AG04449 (cell line): ENCODE measurements at regions of chr10 and their contacts with region 1.

Region 1: GRCh38 chr10:103781329-103782061 is 73.9 kb downstream of the SH3PXD2A start:
- DNase-seq: peak; percentile 91
- H3K4me3 ChIP-seq: no peak overlapping the region
- CTCF ChIP-seq: peak; percentile 37

Region 2: DNA sequence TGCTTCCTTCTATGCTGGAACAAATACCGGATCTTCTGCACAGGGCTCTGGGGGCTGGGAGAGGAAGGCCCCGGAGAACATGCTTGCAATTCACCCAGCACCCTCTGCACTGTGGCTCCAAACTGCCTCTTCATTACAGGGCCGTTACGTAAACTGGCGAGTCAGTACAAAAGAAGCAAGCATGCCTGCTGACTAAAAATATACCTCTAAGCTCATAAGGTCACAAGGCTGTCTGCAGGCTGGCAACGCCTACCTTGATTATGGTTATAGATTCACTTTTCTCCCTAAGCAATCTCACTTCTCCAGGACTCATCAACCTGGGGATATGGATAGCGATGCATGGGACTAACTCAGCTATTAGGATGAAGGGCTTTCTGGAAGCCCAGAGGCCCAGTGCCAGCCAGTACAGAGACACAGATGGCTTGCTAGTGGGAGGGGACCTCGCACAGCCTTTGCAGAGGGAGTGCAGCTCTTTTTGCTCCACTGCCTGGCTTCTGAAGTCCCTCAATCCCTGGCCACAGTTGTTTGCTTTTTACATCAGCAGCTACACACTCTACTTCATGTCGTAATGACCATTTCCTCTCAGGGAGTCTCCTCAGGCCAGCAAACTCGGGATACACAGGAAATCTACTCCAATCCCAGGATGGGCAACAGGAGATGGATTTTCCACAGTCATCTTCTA is 22.3 kb before region 1 on chr10:
- CTCF ChIA-PET with region 1: interaction called, 10 read pairs
- POLR2A ChIA-PET with region 1: interaction called, 12 read pairs
- DNase-seq: peak; percentile 68
- H3K4me3 ChIP-seq: no peak overlapping the region
- CTCF ChIP-seq: no peak